ENCODE measurements at regions of chr1 and their contacts with region 1.

Region 1: GRCh38 chr1:149844101-149844500 is 55.3 kb upstream of the BOLA1 start:
- DNase-seq: no peak
- H3K4me3 ChIP-seq: peak overlapping the region; percentile 58
- H3K27me3 ChIP-seq: no peaks in the 10 kb centered on the region
- CTCF ChIP-seq: no peak

Region 2: GRCh38 chr1:149886396-149887195 is 42.5 kb after region 1 on chr1:
- CTCF ChIA-PET with region 1: no interaction called
- POLR2A ChIA-PET with region 1: interaction called, 12 read pairs
- DNase-seq: peak; percentile 98
- H3K4me3 ChIP-seq: peak overlapping the region; percentile 67
- H3K27me3 ChIP-seq: no peaks in the 10 kb centered on the region
- CTCF ChIP-seq: no peak

Region 3: GRCh38 chr1:150053926-150054325 is 209.8 kb after region 1 on chr1:
- CTCF ChIA-PET with region 1: no interaction called
- POLR2A ChIA-PET with region 1: no interaction called
- DNase-seq: no peak
- H3K4me3 ChIP-seq: no peak overlapping the region
- H3K27me3 ChIP-seq: no peaks in the 10 kb centered on the region
- CTCF ChIP-seq: no peak

Measured in BJ (cell line).